PC-9 (cell line): ENCODE measurements at regions of chr3 and their contacts with region 1.

Region 1: GRCh38 chr3:34683851-34684250 is 885.4 kb downstream of the PDCD6IP start:
- DNase-seq: peak in 1 of 2 experiments; percentile 36
- H3K4me3 ChIP-seq: no peak overlapping the region
- H3K27ac ChIP-seq: no peak overlapping the region
- H3K4me1 ChIP-seq: no peaks in the 10 kb centered on the region
- H3K27me3 ChIP-seq: no peaks in the 10 kb centered on the region
- CTCF ChIP-seq: peak; percentile 56

Region 2: GRCh38 chr3:33883538-33883950 is 800.3 kb before region 1 on chr3:
- CTCF ChIA-PET with region 1: interaction called, 3 read pairs
- POLR2A ChIA-PET with region 1: no interaction called
- intact Hi-C with region 1: loop called (anchors 1 kb)
- DNase-seq: peak in 1 of 2 experiments; percentile 9
- H3K4me3 ChIP-seq: no peak overlapping the region
- H3K27ac ChIP-seq: no peak overlapping the region
- H3K4me1 ChIP-seq: no peaks in the 10 kb centered on the region
- H3K27me3 ChIP-seq: peaks cover 3% of the 10 kb centered on the region; the same call in 1 of the 2 replicates
- CTCF ChIP-seq: peak; percentile 77